ENCODE measurements at regions of chr5 and their contacts with region 1.

Region 1: DNA sequence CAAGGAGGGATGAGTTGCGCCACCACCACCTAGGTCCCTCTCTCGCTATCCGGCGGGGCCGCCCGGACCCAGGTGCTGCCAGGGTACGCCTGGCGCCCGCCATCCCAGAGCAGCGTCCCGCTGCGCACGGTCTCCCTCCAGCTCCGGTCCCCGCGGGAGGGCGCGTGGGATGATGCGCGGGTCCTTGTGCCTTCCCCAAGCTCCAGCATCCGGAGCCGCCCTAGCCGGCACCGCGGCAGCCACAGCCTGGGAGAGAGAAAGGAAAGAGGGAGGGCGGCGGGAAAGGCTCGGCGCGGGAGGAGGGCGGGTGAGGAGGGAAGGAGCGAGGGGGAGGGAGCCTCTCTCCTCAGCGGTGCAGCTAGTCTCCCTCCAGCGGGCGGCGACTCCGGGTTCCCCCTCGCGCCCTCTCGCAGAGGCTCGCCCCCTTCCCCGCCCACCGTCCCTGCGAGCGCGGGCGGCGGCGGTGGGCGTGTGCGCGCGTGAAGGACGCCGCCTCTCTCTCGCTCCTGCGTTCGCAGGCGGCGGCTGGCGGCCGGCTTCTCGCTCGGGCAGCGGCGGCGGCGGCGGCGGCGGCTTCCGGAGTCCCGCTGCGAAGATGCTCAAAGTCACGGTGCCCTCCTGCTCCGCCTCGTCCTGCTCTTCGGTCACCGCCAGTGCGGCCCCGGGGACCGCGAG is at the start of gene CAMK4:
- DNase-seq: peak; percentile 74 to 87 (median 84)
- ATAC-seq: peak; percentile 95
- H3K4me3 ChIP-seq: peak within 1 kb of the TSS; percentile 81
- H3K4me3 Mint-ChIP-seq: peak within 1 kb of the TSS; percentile 79 to 99 (median 96)
- H3K27ac ChIP-seq: peak within 1 kb of the TSS; percentile 93
- H3K27ac Mint-ChIP-seq: peak within 1 kb of the TSS; percentile 89 to 99 (median 97)
- H3K4me1 ChIP-seq: peaks cover 17 to 25% of the 10 kb centered on the region in 2 donors
- H3K4me1 Mint-ChIP-seq: peaks cover 15 to 39% (median 26%) of the 10 kb centered on the region in 7 donors
- H3K27me3 ChIP-seq: no peaks in the 10 kb centered on the region
- H3K27me3 Mint-ChIP-seq: peaks cover 0 to 4% (median 0%) of the 10 kb centered on the region in 5 donors
- total RNA-seq, gene CAMK4: 118 to 366 (median 210) TPM

Region 2: GRCh38 chr5:111092062-111092853 is 131.8 kb before region 1 on chr5 and contains the start of gene WDR36:
- CTCF ChIA-PET with region 1: no interaction called
- POLR2A ChIA-PET with region 1: no interaction called
- intact Hi-C with region 1: loop called (anchors 2 kb)
- DNase-seq: peak; percentile 80 to 95 (median 87)
- ATAC-seq: peak; percentile 99
- H3K4me3 ChIP-seq: peak within 1 kb of the TSS; percentile 88
- H3K4me3 Mint-ChIP-seq: peak within 1 kb of the TSS; percentile 91 to 99 (median 98)
- H3K27ac ChIP-seq: peak within 1 kb of the TSS; percentile 82
- H3K27ac Mint-ChIP-seq: peak within 1 kb of the TSS; percentile 66 to 98 (median 94)
- H3K4me1 ChIP-seq: peaks cover 11 to 20% of the 10 kb centered on the region in 2 donors
- H3K4me1 Mint-ChIP-seq: peaks cover 22 to 49% (median 39%) of the 10 kb centered on the region in 7 donors
- H3K27me3 ChIP-seq: no peaks in the 10 kb centered on the region
- H3K27me3 Mint-ChIP-seq: peaks cover 0 to 12% (median 5%) of the 10 kb centered on the region in 5 donors
- total RNA-seq, gene WDR36: 24.8 to 37.4 (median 29.7) TPM

Region 3: DNA sequence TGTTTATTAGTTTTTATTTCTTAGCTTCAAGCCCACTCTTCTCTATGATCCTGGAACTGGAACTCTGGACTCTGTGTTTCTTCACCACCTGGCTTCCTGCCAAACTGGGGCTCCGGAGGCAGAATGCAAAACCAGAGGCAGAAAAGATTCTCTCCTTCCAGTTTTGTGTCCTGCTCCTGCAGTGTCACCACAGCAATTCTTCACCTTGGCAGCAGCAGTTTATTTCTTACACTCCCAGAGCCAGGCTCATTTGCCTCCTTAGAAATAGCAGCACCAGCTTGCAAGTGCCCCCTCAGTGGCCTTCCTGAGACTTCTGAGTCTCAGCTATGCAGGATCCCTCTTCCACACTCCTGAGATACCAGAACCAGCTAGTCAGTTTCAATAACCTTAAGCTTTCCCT is 26.5 kb before region 1 on chr5:
- CTCF ChIA-PET with region 1: no interaction called
- POLR2A ChIA-PET with region 1: interaction called, 5 read pairs
- intact Hi-C with region 1: loop called in 1 of 2 experiments (anchors 2 kb)
- DNase-seq: no peak
- ATAC-seq: no peak
- H3K4me3 ChIP-seq: no peak overlapping the region
- H3K4me3 Mint-ChIP-seq: no peak overlapping the region
- H3K27ac ChIP-seq: no peak overlapping the region
- H3K27ac Mint-ChIP-seq: no peak overlapping the region
- H3K4me1 ChIP-seq: no peaks in the 10 kb centered on the region
- H3K4me1 Mint-ChIP-seq: peaks cover 0 to 13% (median 8%) of the 10 kb centered on the region in 7 donors
- H3K27me3 ChIP-seq: no peaks in the 10 kb centered on the region
- H3K27me3 Mint-ChIP-seq: peaks cover 0 to 30% (median 0%) of the 10 kb centered on the region in 5 donors

Region 4: DNA sequence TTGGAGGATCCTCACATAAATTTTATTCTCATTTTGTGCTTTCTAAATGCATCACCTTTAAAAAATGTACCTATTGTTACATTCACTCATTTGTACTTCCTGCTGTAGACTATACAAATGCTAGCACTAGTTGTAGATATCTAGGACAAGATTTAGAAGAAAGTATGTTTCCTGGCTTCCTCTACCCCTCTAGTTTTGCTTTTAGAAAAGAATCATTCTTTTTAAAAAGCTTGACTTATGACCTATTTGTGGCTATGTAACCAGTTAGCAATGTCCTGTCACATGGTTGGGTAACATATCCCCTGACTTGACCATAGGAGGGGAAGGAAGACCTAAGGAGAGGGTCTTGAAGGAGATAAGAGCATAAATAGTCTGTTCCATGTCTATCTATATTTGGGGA is 13.4 kb after region 1 on chr5:
- CTCF ChIA-PET with region 1: interaction called, 29 read pairs
- POLR2A ChIA-PET with region 1: interaction called, 207 read pairs
- intact Hi-C with region 1: loop called (anchors 1 kb)
- DNase-seq: peak in 1 of 9 donors; percentile 33
- ATAC-seq: no peak
- H3K4me3 ChIP-seq: peak overlapping the region; percentile 38
- H3K4me3 Mint-ChIP-seq: peak overlapping the region; percentile 72 to 93 (median 78)
- H3K27ac ChIP-seq: peak overlapping the region; percentile 93
- H3K27ac Mint-ChIP-seq: peak overlapping the region; percentile 86 to 99 (median 94)
- H3K4me1 ChIP-seq: peaks cover 66 to 93% of the 10 kb centered on the region in 2 donors
- H3K4me1 Mint-ChIP-seq: peaks cover 45 to 96% (median 94%) of the 10 kb centered on the region in 7 donors
- H3K27me3 ChIP-seq: no peaks in the 10 kb centered on the region
- H3K27me3 Mint-ChIP-seq: no peaks in the 10 kb centered on the region

Region 5: GRCh38 chr5:111266491-111266890 is 42.5 kb after region 1 on chr5:
- CTCF ChIA-PET with region 1: interaction called, 7 read pairs
- POLR2A ChIA-PET with region 1: interaction called, 10 read pairs
- intact Hi-C with region 1: no loop called
- DNase-seq: no peak
- ATAC-seq: no peak
- H3K4me3 ChIP-seq: no peak overlapping the region
- H3K4me3 Mint-ChIP-seq: peak overlapping the region in 2 of 10 donors; percentile 4 to 8
- H3K27ac ChIP-seq: no peak overlapping the region
- H3K27ac Mint-ChIP-seq: peak overlapping the region in 7 of 9 donors; percentile 37 to 67 (median 53)
- H3K4me1 ChIP-seq: peaks cover 0 to 28% of the 10 kb centered on the region in 2 donors
- H3K4me1 Mint-ChIP-seq: peaks cover 32 to 49% (median 39%) of the 10 kb centered on the region in 7 donors
- H3K27me3 ChIP-seq: no peaks in the 10 kb centered on the region
- H3K27me3 Mint-ChIP-seq: no peaks in the 10 kb centered on the region

Region 6: DNA sequence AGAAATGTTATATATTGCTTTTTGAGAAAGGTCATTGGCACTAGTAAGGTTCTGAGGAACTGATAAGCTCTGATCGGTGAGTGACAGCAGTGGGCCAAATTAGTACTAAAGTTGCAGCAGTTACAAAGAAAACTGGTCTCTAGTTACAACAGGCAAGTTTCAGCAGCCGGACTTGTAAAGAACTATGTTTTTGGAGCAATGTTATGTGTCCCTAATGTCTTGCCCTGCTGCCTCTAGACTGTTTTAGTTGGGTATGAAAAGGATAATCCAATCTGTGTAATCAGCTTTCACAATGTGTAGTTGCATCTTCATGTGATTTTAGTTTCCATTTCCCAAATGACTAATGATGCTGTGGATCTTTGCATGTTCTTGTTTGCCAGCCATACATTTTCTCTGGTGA is 113.7 kb after region 1 on chr5:
- CTCF ChIA-PET with region 1: no interaction called
- POLR2A ChIA-PET with region 1: no interaction called
- intact Hi-C with region 1: loop called in 1 of 2 experiments (anchors 1 kb)
- DNase-seq: no peak
- ATAC-seq: no peak
- H3K4me3 ChIP-seq: no peak overlapping the region
- H3K4me3 Mint-ChIP-seq: peak overlapping the region in 8 of 10 donors; percentile 0 to 70 (median 42)
- H3K27ac ChIP-seq: no peak overlapping the region
- H3K27ac Mint-ChIP-seq: peak overlapping the region in 6 of 9 donors; percentile 18 to 72 (median 58)
- H3K4me1 ChIP-seq: peaks cover 10 to 23% of the 10 kb centered on the region in 2 donors
- H3K4me1 Mint-ChIP-seq: peaks cover 35 to 97% (median 89%) of the 10 kb centered on the region in 7 donors
- H3K27me3 ChIP-seq: no peaks in the 10 kb centered on the region
- H3K27me3 Mint-ChIP-seq: no peaks in the 10 kb centered on the region

Region 7: DNA sequence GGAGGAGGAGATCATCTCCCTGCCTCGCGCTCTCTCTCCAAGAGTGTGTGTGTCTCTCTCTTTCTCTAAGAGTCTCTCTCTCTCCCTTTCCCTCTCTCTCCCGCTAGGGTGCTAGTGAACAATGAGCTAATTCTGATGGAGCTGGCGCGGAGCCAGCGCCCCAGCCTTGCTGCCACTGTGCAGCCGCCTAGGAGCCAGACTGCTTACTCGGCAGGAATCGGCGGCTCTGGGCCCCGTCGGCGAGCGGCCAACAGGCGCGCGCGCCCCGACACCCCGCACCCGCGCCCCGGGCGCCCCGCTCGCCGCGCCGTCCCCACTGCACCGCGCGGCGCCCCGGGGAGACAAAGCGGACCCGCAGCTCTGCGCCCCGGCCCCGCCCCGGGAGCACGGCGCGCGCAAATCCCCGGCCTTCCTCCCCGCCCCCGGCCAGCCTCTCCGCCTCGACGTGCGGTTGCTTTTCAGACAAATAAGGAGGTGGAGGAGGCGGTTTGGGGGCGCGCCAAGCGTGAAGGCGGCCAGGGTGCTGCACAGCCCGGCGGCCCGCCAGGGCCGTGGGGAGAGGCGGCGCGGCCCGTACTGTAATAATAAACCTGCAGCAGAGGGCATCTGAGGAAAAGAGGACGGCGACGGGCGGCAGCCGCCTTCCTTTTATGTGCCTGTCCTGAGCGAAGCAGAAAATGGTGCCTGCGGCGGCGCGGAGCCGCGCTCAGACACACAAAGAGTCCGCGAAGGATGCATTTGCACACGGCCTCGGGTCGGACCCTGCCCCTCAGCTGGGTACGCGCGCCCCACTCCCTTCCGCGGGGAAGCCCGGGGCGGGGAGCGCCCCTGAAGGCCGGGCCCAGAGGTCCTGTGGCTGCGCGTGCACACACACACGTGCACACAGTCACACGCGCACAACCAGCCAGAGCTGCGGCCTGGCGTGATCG is 533.6 kb after region 1 on chr5:
- CTCF ChIA-PET with region 1: no interaction called
- POLR2A ChIA-PET with region 1: no interaction called
- intact Hi-C with region 1: loop called in 1 of 2 experiments (anchors 5 kb)
- DNase-seq: peak; percentile 65 to 89 (median 86)
- ATAC-seq: peak; percentile 87
- H3K4me3 ChIP-seq: peak overlapping the region; percentile 64
- H3K4me3 Mint-ChIP-seq: peak overlapping the region; percentile 83 to 94 (median 90)
- H3K27ac ChIP-seq: peak overlapping the region; percentile 75
- H3K27ac Mint-ChIP-seq: peak overlapping the region; percentile 57 to 92 (median 83)
- H3K4me1 ChIP-seq: peaks cover 0 to 4% of the 10 kb centered on the region in 2 donors
- H3K4me1 Mint-ChIP-seq: peaks cover 4 to 29% (median 18%) of the 10 kb centered on the region in 7 donors
- H3K27me3 ChIP-seq: no peaks in the 10 kb centered on the region
- H3K27me3 Mint-ChIP-seq: peaks cover 0 to 6% (median 0%) of the 10 kb centered on the region in 5 donors

Region 8: DNA sequence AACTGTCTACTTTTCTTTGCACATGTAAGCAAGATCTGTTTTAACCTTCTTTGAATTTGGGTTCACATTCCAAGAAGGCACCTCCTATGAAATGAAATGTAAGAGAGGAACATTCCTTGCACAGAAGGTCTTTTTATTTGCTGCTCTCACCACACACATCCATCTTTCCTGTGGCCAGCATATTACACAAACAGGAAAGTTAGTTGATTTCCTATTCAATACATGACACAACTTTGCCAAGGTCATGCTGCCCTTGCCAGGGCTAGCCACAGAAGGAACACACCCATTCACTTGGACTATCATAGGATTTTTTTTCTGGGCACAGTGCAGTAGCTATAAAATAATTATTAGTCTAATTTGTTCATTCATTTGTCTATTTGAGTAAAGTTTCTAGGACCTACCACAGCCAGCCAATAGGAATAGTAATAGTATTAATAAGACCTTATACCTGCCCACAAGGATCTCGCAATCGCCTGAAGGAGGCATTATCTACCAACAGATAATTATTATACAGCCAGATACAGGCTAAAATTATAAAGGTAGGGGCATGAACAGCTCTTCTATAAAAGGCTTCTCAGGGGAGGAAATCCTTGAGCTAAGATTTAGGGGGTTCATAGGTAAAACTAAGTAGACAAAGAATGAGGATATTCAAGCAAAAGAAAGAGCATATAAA is 611.0 kb after region 1 on chr5:
- CTCF ChIA-PET with region 1: no interaction called
- POLR2A ChIA-PET with region 1: no interaction called
- intact Hi-C with region 1: no loop called
- DNase-seq: no peak
- ATAC-seq: no peak
- H3K4me3 ChIP-seq: no peak overlapping the region
- H3K4me3 Mint-ChIP-seq: no peak overlapping the region
- H3K27ac ChIP-seq: no peak overlapping the region
- H3K27ac Mint-ChIP-seq: no peak overlapping the region
- H3K4me1 ChIP-seq: no peaks in the 10 kb centered on the region
- H3K4me1 Mint-ChIP-seq: no peaks in the 10 kb centered on the region
- H3K27me3 ChIP-seq: no peaks in the 10 kb centered on the region
- H3K27me3 Mint-ChIP-seq: peaks cover 0 to 21% (median 7%) of the 10 kb centered on the region in 5 donors